ENCODE measurements at regions of chr1 and their contacts with region 1.

Region 1: GRCh38 chr1:96966536-96967138 is 245.1 kb downstream of the PTBP2 start:
- DNase-seq: peak; percentile 83
- ATAC-seq: peak; percentile 68
- H3K4me3 Mint-ChIP-seq: no peak overlapping the region
- H3K27ac Mint-ChIP-seq: no peak overlapping the region
- H3K4me1 Mint-ChIP-seq: no peaks in the 10 kb centered on the region
- H3K27me3 Mint-ChIP-seq: peaks cover 19% of the 10 kb centered on the region

Region 2: GRCh38 chr1:96882091-96882490 is 84.5 kb before region 1 on chr1:
- CTCF ChIA-PET with region 1: no interaction called
- POLR2A ChIA-PET with region 1: no interaction called
- intact Hi-C with region 1: no loop called
- DNase-seq: no peak
- ATAC-seq: no peak
- H3K4me3 Mint-ChIP-seq: no peak overlapping the region
- H3K27ac Mint-ChIP-seq: no peak overlapping the region
- H3K4me1 Mint-ChIP-seq: no peaks in the 10 kb centered on the region
- H3K27me3 Mint-ChIP-seq: no peaks in the 10 kb centered on the region

Region 3: GRCh38 chr1:96901783-96902363 is 64.8 kb before region 1 on chr1:
- CTCF ChIA-PET with region 1: no interaction called
- POLR2A ChIA-PET with region 1: no interaction called
- intact Hi-C with region 1: loop called in 1 of 2 experiments (anchors 10 kb)
- DNase-seq: no peak
- ATAC-seq: no peak
- H3K4me3 Mint-ChIP-seq: no peak overlapping the region
- H3K27ac Mint-ChIP-seq: no peak overlapping the region
- H3K4me1 Mint-ChIP-seq: no peaks in the 10 kb centered on the region
- H3K27me3 Mint-ChIP-seq: no peaks in the 10 kb centered on the region

Region 4: DNA sequence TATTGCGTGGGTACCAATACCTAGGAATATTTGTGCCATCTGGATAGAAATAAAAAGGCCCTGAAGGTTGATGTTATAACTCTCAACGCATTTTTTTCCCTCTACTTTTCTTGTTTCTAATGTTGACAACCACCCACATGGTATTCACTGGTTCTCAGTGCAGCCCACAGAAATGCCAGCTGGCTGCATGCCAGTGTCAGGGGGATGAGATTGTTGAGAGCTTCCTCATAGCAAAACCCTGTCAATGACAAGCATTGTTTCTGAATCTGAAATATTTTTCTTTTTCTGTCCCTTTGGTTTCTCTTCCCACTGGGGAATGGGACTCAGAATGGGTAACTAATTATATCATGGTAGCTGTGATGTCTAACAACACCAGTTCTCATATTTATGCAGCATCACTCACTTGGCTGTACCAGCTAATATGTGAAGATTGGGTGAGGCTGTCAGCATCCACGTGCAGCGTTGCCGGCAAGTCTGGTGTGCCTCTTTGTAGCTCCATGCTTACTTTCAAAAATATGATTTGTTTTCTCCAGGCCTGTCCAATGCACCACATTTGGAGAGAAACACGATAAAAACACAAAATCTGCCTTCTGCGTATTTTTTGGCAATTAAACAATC is 39.5 kb after region 1 on chr1:
- CTCF ChIA-PET with region 1: no interaction called
- POLR2A ChIA-PET with region 1: no interaction called
- intact Hi-C with region 1: no loop called
- DNase-seq: no peak
- ATAC-seq: no peak
- H3K4me3 Mint-ChIP-seq: no peak overlapping the region
- H3K27ac Mint-ChIP-seq: no peak overlapping the region
- H3K4me1 Mint-ChIP-seq: no peaks in the 10 kb centered on the region
- H3K27me3 Mint-ChIP-seq: peaks cover 11% of the 10 kb centered on the region

Region 5: GRCh38 chr1:97174039-97174701 is 207.5 kb after region 1 on chr1:
- CTCF ChIA-PET with region 1: no interaction called
- POLR2A ChIA-PET with region 1: no interaction called
- intact Hi-C with region 1: no loop called
- DNase-seq: no peak
- ATAC-seq: no peak
- H3K4me3 Mint-ChIP-seq: no peak overlapping the region
- H3K27ac Mint-ChIP-seq: no peak overlapping the region
- H3K4me1 Mint-ChIP-seq: no peaks in the 10 kb centered on the region
- H3K27me3 Mint-ChIP-seq: no peaks in the 10 kb centered on the region

Region 6: GRCh38 chr1:97820470-97821188 is 854.0 kb after region 1 on chr1:
- CTCF ChIA-PET with region 1: no interaction called
- POLR2A ChIA-PET with region 1: no interaction called
- intact Hi-C with region 1: loop called (anchors 1 kb)
- DNase-seq: no peak
- ATAC-seq: peak; percentile 39
- H3K4me3 Mint-ChIP-seq: no peak overlapping the region
- H3K27ac Mint-ChIP-seq: no peak overlapping the region
- H3K4me1 Mint-ChIP-seq: no peaks in the 10 kb centered on the region
- H3K27me3 Mint-ChIP-seq: no peaks in the 10 kb centered on the region

Region 7: GRCh38 chr1:98468111-98468717 is 1501.6 kb after region 1 on chr1:
- CTCF ChIA-PET with region 1: interaction called, 3 read pairs
- POLR2A ChIA-PET with region 1: no interaction called
- intact Hi-C with region 1: loop called in 1 of 2 experiments (anchors 2 kb)
- DNase-seq: no peak
- ATAC-seq: no peak
- H3K4me3 Mint-ChIP-seq: no peak overlapping the region
- H3K27ac Mint-ChIP-seq: no peak overlapping the region
- H3K4me1 Mint-ChIP-seq: no peaks in the 10 kb centered on the region
- H3K27me3 Mint-ChIP-seq: no peaks in the 10 kb centered on the region

Measured in activated CD4-positive, alpha-beta T cell treated with anti-CD3 and anti-CD28 coated beads for 36 hours (primary cell).